H1 (cell line): ENCODE measurements at regions of chr2 and their contacts with region 1.

Region 1: GRCh38 chr2:43131024-43131889 is 95.1 kb downstream of the ZFP36L2 start:
- DNase-seq: no peak
- H3K4me3 ChIP-seq: no peak overlapping the region
- H3K27ac ChIP-seq: no peak overlapping the region
- H3K4me1 ChIP-seq: peaks cover 0 to 14% (median 5%) of the 10 kb centered on the region in 4 experiments; a peak in 3 of 7 replicates
- H3K27me3 ChIP-seq: no peaks in the 10 kb centered on the region
- CTCF ChIP-seq: peak in 2 of 3 experiments; percentile 63 to 65; a peak in 3 of 4 replicates
- EP300 ChIP-seq: no peak
- POLR2A ChIP-seq: no peak
- RAD21 ChIP-seq: peak; percentile 83 to 86

Region 2: GRCh38 chr2:42886921-42887320 is 244.3 kb before region 1 on chr2:
- CTCF ChIA-PET with region 1: no interaction called
- POLR2A ChIA-PET with region 1: no interaction called
- DNase-seq: no peak
- H3K4me3 ChIP-seq: no peak overlapping the region
- H3K27ac ChIP-seq: no peak overlapping the region
- H3K4me1 ChIP-seq: no peaks in the 10 kb centered on the region
- H3K27me3 ChIP-seq: no peaks in the 10 kb centered on the region
- CTCF ChIP-seq: no peak
- EP300 ChIP-seq: no peak
- POLR2A ChIP-seq: no peak
- RAD21 ChIP-seq: no peak

Region 3: GRCh38 chr2:42901076-42901640 is 230.1 kb before region 1 on chr2:
- CTCF ChIA-PET with region 1: no interaction called
- POLR2A ChIA-PET with region 1: no interaction called
- DNase-seq: no peak
- H3K4me3 ChIP-seq: no peak overlapping the region
- H3K27ac ChIP-seq: no peak overlapping the region
- H3K4me1 ChIP-seq: peaks cover 0 to 3% (median 0%) of the 10 kb centered on the region in 4 experiments; a peak in 2 of 7 replicates
- H3K27me3 ChIP-seq: peaks cover 0 to 1% (median 0%) of the 10 kb centered on the region in 4 experiments; a peak in 1 of 7 replicates
- CTCF ChIP-seq: no peak
- EP300 ChIP-seq: no peak
- POLR2A ChIP-seq: no peak
- RAD21 ChIP-seq: no peak

Region 4: DNA sequence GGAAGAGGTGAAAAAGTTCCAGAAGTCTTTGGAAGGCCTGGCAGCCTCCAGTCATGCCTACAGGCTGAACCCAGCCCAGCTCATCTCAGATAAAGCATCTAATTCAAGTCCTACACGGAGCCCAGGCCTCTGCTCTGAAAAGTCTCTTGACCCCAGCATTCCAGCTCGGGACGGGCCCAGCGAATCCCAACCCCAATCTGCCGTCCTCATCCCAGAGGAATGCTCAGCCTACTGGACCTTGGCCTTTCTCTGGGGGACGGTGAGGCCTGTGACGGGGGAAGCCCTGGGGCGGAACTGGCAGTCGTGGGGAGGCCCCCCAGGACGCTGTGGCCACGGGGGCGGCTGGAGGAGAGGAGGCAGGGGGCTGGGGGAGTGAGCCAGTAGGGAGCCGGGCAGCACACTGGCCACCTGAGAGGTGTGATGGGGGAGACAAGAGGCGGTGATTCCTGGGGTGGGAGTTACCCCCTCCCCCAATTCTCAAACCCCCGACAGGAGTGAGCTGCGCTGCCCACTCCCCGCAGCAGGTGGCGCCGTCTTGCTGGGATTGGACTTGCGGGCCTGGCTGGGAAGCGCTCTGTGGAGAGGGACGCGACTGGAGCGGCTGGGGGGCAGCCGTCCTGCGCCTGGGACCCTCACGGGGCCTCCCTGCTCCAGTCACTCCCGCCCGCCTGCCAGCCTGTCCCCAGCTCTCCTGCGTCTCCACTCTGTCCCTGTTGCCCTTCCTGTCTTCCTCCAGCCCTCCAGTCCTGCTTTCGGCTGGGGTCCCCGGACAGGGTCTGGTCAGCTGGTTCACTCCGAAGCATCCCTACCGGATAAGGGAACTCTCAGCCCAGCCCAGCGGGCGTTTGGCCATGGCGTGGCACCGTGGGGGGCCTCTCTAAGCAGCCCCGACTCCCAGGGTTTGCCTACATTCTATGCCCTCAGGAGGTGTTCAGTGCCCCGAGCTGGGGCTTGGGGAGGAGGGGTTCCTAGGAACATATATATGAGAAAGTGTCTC is 156.2 kb before region 1 on chr2:
- CTCF ChIA-PET with region 1: interaction called, 13 read pairs
- POLR2A ChIA-PET with region 1: no interaction called
- DNase-seq: peak; percentile 56 to 96
- H3K4me3 ChIP-seq: peak overlapping the region in 3 of 4 experiments; percentile 18 to 51 (median 34); a peak in 5 of 8 replicates
- H3K27ac ChIP-seq: no peak overlapping the region
- H3K4me1 ChIP-seq: peaks cover 0 to 7% (median 4%) of the 10 kb centered on the region in 4 experiments; a peak in 4 of 7 replicates
- H3K27me3 ChIP-seq: no peaks in the 10 kb centered on the region; a peak in 1 of 7 replicates
- CTCF ChIP-seq: peak; percentile 85 to 91 (median 89)
- EP300 ChIP-seq: 0 out of 3 replicates have a peak, but pooled peaks of 1 of the 2 experiments have one; percentile 22
- POLR2A ChIP-seq: no peak
- RAD21 ChIP-seq: peak; percentile 88 to 92

Region 5: GRCh38 chr2:43105586-43106558 is 25.4 kb before region 1 on chr2:
- CTCF ChIA-PET with region 1: interaction called, 73 read pairs
- POLR2A ChIA-PET with region 1: interaction called, 3 read pairs
- DNase-seq: no peak
- H3K4me3 ChIP-seq: no peak overlapping the region
- H3K27ac ChIP-seq: no peak overlapping the region
- H3K4me1 ChIP-seq: peaks cover 4 to 15% (median 12%) of the 10 kb centered on the region in 4 experiments; a peak in 6 of 7 replicates
- H3K27me3 ChIP-seq: peaks cover 0 to 12% (median 0%) of the 10 kb centered on the region in 4 experiments; a peak in 3 of 7 replicates
- CTCF ChIP-seq: peak in 2 of 3 experiments; percentile 29 to 32; a peak in 3 of 4 replicates
- EP300 ChIP-seq: no peak
- POLR2A ChIP-seq: no peak
- RAD21 ChIP-seq: peak in 1 of 2 experiments; percentile 31; a peak in 2 of 4 replicates

Region 6: DNA sequence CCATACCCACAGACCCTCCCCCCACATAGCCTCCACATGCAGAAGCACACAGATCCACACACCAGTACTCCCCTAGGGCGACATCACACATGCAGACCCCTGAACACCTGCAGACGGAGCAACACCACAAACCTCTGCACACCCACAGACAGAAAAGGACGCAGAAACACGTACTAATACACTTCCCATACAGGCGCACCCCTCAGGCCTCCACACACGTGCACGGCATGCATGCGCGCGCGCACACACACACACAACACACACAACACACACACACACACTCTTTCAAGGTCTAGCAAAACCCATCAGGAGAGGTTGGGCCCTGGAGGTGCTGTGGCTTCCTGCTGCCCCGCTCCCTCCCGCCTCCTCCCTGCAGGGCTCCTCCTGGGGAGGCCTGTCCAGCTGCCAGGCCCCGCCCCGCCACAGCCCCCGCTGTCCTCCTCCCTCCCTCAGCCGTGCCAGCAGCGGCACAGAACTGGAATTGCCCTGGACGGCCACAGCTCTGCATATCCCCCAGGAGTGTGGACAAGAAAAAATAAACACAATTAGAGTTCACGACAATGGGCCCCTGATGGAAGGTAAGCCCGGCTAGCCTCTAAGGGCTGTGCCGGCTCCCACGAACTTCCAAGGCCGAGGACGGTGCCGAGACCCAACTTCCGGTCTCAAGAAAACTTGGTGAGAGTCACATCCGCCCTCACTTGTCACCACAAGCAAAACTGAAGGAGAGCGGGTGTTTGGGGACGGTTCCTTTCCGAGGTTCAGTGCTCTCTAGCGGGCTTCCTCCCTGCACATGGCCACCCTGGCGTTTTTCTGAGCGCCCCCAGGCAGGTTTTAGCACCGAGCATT is 88.3 kb after region 1 on chr2:
- CTCF ChIA-PET with region 1: interaction called, 16 read pairs
- POLR2A ChIA-PET with region 1: interaction called, 9 read pairs
- DNase-seq: peak in 1 of 2 experiments; percentile 76
- H3K4me3 ChIP-seq: peak overlapping the region; percentile 14 to 83 (median 34); a peak in 7 of 8 replicates
- H3K27ac ChIP-seq: peak overlapping the region; percentile 65; the same call in 1 of the 2 replicates
- H3K4me1 ChIP-seq: peaks cover 20 to 43% (median 25%) of the 10 kb centered on the region in 4 experiments
- H3K27me3 ChIP-seq: no peaks in the 10 kb centered on the region
- CTCF ChIP-seq: no peak
- EP300 ChIP-seq: no peak
- POLR2A ChIP-seq: no peak
- RAD21 ChIP-seq: no peak

Region 7: DNA sequence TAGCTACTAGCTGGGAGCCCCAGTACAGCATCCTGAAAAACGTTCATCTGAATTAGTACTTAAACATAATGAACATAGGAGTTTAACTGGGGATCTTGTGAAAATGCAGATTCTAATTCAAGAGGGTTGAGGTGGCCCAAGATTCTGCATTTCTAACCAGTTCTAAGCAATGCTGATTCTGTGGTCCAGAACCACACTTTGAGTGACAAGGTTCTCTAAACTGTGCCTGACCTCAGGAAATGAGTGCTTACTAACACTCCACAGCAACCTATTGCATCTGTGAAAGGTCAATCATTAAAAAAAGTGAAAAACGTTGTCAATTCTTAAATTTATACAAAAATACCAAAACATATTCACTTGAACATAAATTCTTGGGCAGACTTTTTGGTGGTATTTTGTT is 252.3 kb after region 1 on chr2:
- CTCF ChIA-PET with region 1: no interaction called
- POLR2A ChIA-PET with region 1: no interaction called
- DNase-seq: no peak
- H3K4me3 ChIP-seq: no peak overlapping the region
- H3K27ac ChIP-seq: no peak overlapping the region
- H3K4me1 ChIP-seq: no peaks in the 10 kb centered on the region
- H3K27me3 ChIP-seq: no peaks in the 10 kb centered on the region
- CTCF ChIP-seq: no peak
- EP300 ChIP-seq: no peak
- POLR2A ChIP-seq: no peak
- RAD21 ChIP-seq: no peak

Region 8: DNA sequence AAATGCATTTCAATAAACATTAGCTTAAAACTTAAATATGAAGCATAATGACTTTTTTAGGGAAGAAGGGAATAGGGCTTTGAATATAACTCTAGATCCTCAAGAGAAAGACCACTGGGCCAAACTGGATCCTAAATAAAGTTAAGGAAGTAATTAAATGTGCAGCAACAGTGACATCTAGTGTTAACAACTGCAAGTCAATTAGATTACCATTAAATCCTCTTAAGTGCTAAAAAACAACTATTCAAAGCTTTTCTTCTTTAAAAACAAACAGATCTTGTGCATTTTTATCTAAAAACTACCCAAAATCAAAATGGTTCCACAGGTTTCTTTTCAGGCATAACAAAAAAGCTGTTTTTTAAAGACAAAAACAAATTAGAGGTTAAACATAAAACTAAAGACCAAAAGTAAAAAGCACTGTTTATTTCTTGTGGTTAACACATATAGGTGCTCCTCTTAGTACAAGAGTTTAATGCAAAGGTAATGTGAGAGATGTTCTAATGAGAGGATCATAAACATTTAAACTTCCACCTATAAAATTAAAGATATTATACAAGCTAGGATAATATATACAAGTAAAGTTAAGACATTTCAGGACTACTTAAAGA is 353.2 kb after region 1 on chr2:
- CTCF ChIA-PET with region 1: interaction called, 15 read pairs
- POLR2A ChIA-PET with region 1: no interaction called
- DNase-seq: peak in 1 of 2 experiments; percentile 21
- H3K4me3 ChIP-seq: no peak overlapping the region
- H3K27ac ChIP-seq: no peak overlapping the region
- H3K4me1 ChIP-seq: no peaks in the 10 kb centered on the region
- H3K27me3 ChIP-seq: no peaks in the 10 kb centered on the region
- CTCF ChIP-seq: peak in 2 of 3 experiments; percentile 38 to 51; a peak in 2 of 4 replicates
- EP300 ChIP-seq: no peak
- POLR2A ChIP-seq: no peak
- RAD21 ChIP-seq: peak; percentile 75 to 81